ENCODE measurements at regions of chr2 and their contacts with region 1.

Region 1: DNA sequence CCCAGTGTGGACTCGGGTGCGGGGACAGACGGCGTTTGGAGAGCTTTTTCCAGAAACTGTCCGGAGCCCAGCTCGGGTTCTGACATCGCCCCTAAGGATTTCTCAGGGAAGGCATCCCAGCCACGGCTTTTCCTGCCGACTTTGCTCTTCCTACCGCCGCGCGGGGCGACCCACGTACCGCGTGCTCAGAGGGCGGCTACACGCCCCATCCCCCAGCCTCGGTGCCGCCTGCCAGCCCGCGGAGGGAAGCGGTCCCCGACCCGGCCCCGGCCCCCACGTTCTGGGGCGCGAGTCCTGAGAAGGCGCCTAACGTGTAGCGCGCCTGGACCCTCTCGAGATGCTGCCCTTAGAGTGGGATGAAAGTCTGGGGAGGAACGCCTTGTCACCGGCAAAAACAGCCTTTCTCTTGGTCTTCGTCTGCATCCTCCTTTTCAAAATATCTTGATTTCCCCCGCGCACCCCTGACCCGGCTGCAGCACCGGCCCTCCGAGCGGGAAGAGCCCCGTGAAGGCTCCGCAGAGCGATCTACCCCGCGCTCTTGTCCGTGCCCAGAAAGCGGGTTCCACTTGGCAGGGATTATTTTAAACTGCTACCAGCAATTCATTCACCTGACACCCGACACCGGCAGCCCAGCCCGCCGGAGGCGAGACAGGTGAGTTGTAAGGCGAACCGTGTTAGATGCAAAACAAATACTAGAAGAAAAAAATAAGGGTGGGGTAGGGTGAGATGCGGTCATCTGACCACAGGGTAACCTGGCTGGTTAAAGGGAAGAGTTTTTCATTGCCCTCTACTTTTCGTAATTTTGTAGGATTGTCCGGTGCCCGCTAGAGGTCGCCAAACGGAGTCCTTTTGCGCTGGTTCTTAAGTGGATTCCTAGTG is 812 bp upstream of the KCNG3 start:
- DNase-seq: peak; percentile 93 to 99
- H3K4me3 ChIP-seq: peak overlapping the region; percentile 89
- H3K27ac ChIP-seq: peak overlapping the region; percentile 68
- H3K4me1 ChIP-seq: peaks cover 25% of the 10 kb centered on the region
- H3K27me3 ChIP-seq: no peaks in the 10 kb centered on the region
- CTCF ChIP-seq: peak; percentile 96

Region 2: DNA sequence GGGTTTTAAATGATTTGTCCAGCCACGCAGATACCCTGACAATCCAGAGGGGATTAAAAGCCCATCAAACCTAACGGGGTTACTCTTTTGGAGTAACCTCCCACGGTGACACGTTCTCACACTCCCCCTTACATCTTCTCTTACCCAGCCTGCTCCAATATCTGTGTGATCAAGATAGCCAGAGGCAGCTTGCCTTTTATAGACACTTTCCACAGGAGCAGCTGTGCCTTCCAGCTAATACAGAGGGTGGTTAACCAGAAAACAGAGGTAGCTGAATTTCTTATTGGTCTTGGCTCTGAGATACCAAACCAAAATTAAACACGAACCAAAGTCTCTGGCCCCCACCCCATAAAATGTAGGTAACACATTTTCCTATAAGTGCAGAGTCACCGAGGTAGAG is 679.6 kb before region 1 on chr2:
- CTCF ChIA-PET with region 1: no interaction called
- POLR2A ChIA-PET with region 1: interaction called, 24 read pairs
- intact Hi-C with region 1: no loop called
- DNase-seq: no peak
- H3K4me3 ChIP-seq: no peak overlapping the region
- H3K27ac ChIP-seq: no peak overlapping the region
- H3K4me1 ChIP-seq: no peaks in the 10 kb centered on the region
- H3K27me3 ChIP-seq: peaks cover 25% of the 10 kb centered on the region
- CTCF ChIP-seq: no peak

Region 3: GRCh38 chr2:41906338-41906725 is 588.3 kb before region 1 on chr2:
- CTCF ChIA-PET with region 1: no interaction called
- POLR2A ChIA-PET with region 1: no interaction called
- intact Hi-C with region 1: no loop called
- DNase-seq: no peak
- H3K4me3 ChIP-seq: no peak overlapping the region
- H3K27ac ChIP-seq: no peak overlapping the region
- H3K4me1 ChIP-seq: peaks cover 11% of the 10 kb centered on the region
- H3K27me3 ChIP-seq: no peaks in the 10 kb centered on the region
- CTCF ChIP-seq: no peak

Region 4: DNA sequence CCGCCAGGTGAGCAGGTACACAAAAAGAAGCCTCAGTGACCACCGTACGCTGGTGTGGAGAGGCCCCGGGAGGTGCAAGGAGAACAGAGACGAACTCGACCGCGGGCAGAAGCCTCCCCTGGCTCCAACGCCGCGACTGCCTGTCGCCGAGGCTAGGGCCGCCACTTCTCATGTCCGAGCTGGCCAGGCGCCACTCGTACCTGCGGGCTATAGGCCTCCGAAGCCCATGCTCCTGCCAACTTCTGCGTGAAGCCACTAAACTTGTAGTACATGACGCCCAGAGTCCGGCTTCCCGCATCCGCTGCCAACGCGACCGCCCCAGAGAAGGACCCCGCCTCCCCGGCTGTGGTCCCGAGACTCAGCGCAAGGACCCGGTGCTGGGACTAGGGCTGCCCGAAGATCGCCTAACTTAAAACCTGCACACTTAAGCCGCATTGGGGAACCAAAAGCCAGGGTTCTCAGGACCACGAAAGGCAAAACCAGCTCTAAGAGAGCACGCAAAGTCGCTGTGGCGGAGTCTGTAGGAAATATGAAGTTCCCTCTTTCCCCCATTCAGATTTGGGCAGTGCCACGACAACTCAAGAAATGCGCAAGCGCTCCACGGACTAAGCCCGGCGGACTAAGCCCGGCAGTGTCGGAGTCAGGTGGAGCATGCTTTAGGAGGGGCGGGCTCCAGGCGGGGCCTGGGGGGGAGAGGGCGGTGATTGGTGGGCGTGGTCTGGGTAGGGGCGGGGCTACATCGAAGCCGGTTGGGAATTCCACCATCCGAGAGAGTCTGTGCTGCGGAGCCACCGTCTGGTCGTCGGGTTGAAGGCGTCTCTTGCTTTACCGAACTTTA is 133.5 kb before region 1 on chr2 and contains the start of gene COX7A2L:
- CTCF ChIA-PET with region 1: no interaction called
- POLR2A ChIA-PET with region 1: no interaction called
- intact Hi-C with region 1: loop called (anchors 1 kb)
- DNase-seq: peak; percentile 91 to 97
- H3K4me3 ChIP-seq: peak within 1 kb of the TSS; percentile 89
- H3K27ac ChIP-seq: peak within 1 kb of the TSS; percentile 75
- H3K4me1 ChIP-seq: peaks cover 27% of the 10 kb centered on the region
- H3K27me3 ChIP-seq: no peaks in the 10 kb centered on the region
- CTCF ChIP-seq: no peak
- total RNA-seq, gene COX7A2L: 141 and 144 TPM in 2 replicates

Region 5: DNA sequence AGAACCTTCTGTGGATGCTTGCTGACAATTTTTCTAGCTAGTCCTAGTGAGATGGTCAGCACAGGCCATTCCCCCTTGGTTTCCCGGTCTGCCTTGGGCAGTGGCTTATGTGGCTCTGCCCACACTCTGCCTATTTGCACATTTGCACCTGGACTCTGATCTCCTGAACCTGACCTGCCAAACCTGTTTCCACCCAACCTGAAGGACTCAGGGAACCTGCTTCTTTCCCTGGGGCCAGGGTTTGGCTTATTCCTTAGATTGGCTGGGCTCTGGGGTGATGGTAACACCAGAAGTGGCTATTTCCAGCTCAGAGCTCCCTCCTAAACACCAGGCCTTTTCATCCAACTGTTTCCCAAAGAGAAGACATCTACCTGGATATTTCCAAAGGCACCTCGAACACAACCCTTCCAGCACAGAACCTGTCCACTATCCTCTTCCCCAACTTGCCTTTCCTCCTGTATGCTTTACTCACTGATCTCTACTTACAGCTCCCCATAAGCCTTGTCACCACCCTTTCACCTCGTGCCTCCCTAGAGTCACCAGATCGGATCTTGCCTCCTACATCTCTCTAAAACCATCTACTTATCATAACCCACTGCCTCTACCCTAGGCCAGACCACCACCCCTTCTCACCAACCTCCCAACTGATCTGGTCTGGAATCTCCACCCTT is 68.0 kb after region 1 on chr2:
- CTCF ChIA-PET with region 1: no interaction called
- POLR2A ChIA-PET with region 1: no interaction called
- intact Hi-C with region 1: loop called (anchors 2 kb)
- DNase-seq: peak; percentile 86 to 99
- H3K4me3 ChIP-seq: peak overlapping the region; percentile 15; the same call in 1 of the 2 replicates
- H3K27ac ChIP-seq: peak overlapping the region; percentile 83
- H3K4me1 ChIP-seq: peaks cover 84% of the 10 kb centered on the region
- H3K27me3 ChIP-seq: no peaks in the 10 kb centered on the region
- CTCF ChIP-seq: no peak

Region 6: DNA sequence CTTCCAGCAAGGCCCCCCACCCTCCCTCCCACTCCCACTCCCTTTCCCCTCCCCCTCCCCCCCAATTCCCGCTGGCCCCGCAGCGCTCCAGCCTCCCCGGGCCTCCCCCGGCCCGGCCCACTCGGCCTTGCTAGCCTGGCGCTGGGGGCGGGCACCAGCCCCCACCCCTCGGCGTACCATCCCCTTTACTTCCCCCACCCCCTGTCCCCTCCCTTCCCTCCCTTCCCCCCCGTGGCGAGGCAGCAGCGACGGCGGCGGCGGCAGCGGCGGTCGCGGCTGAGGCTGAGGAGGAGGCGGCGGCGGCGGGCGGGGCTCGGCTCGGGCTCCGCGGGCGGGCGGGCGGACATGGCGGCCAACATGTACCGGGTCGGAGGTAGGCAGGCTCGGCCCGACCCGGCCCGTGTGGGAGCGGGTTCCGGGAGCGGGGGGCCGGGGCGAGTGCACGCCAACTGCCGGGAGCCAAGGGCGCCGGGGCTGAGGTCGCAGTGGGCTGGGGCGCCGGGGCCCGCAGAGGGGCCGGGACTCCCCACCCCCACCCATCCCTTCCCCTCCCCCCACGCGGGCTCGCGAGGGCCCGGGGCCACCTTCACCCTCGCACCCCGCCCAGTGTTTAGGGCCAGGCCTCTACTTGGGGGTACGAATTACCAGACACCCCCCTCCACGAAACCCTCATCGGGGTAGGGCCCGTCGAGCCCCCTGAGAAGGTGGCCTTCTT is 74.0 kb after region 1 on chr2 and contains the start of gene MTA3:
- CTCF ChIA-PET with region 1: interaction called, 17 read pairs
- POLR2A ChIA-PET with region 1: no interaction called
- intact Hi-C with region 1: loop called (anchors 2 kb)
- DNase-seq: peak in 1 of 2 experiments; percentile 64
- H3K4me3 ChIP-seq: peak within 1 kb of the TSS; percentile 76
- H3K27ac ChIP-seq: peak within 1 kb of the TSS; percentile 54
- H3K4me1 ChIP-seq: peaks cover 58% of the 10 kb centered on the region
- H3K27me3 ChIP-seq: no peaks in the 10 kb centered on the region
- CTCF ChIP-seq: no peak
- total RNA-seq, gene MTA3: 58.7 and 89.8 TPM in 2 replicates

Region 7: DNA sequence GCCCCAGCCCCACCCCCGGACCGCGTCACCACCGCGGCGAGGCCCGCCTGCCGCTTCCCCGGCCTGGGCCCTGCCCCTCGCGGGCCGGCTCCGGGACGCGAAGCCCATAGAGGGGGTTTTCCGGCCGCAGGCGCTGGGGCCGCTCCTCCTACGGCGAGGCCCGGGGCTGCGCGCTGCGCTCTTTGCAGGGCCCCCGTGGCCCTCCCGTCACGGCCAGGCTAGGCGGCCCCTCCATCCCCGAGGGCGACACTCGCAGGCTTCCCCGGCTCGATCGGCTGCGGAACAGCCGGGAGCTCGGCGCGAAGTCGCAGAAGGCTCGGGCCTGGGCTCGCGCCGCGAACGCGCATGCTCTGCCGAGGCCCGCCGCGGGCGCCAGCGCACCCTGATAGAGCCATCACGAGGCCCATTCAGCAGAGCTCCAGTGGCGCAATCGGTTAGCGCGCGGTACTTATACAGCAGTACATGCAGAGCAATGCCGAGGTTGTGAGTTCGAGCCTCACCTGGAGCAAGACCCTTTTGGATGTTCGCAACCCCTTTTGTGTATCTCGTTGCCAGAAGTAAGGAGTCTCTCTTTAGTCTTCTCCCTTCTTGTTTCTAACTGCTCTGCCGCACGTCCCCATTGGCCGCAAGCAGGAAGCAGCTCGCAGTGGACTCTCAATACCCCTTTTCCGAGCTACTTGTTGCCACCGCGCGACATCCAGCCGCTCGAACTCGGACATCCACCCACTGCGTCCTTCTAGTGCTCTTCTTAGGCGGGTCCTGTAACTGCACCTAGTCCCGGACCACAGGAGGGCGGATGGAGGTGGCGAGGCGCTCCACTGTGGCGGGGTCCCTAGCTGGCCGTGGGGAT is 315.8 kb after region 1 on chr2:
- CTCF ChIA-PET with region 1: interaction called, 4 read pairs
- POLR2A ChIA-PET with region 1: no interaction called
- intact Hi-C with region 1: loop called (anchors 2 kb)
- DNase-seq: peak; percentile 92 to 97
- H3K4me3 ChIP-seq: peak overlapping the region; percentile 71
- H3K27ac ChIP-seq: peak overlapping the region; percentile 82
- H3K4me1 ChIP-seq: peaks cover 9% of the 10 kb centered on the region
- H3K27me3 ChIP-seq: no peaks in the 10 kb centered on the region
- CTCF ChIP-seq: no peak

Measured in PC-9 (cell line).